ENCODE measurements at regions of chr11 and their contacts with region 1.

Region 1: GRCh38 chr11:62831520-62832335 is at the start of gene STX5:
- DNase-seq: peak; percentile 99
- ATAC-seq: peak; percentile 89
- H3K4me3 ChIP-seq: peak within 1 kb of the TSS; percentile 91
- H3K27ac ChIP-seq: peak within 1 kb of the TSS; percentile 75
- H3K4me1 ChIP-seq: peaks cover 22% of the 10 kb centered on the region
- H3K27me3 ChIP-seq: no peaks in the 10 kb centered on the region
- CTCF ChIP-seq: no peak
- total RNA-seq, gene STX5: 41.4 and 48.2 TPM in 2 replicates

Region 2: GRCh38 chr11:62753736-62754603 is 77.8 kb before region 1 on chr11 and contains the start of gene ZBTB3:
- CTCF ChIA-PET with region 1: no interaction called
- POLR2A ChIA-PET with region 1: interaction called, 11 read pairs
- intact Hi-C with region 1: no loop called
- DNase-seq: peak; percentile 99
- ATAC-seq: peak; percentile 98
- H3K4me3 ChIP-seq: peak within 1 kb of the TSS; percentile 87
- H3K27ac ChIP-seq: peak within 1 kb of the TSS; percentile 73
- H3K4me1 ChIP-seq: peaks cover 16% of the 10 kb centered on the region
- H3K27me3 ChIP-seq: no peaks in the 10 kb centered on the region
- CTCF ChIP-seq: no peak
- total RNA-seq, gene ZBTB3: 2.2 and 3.3 TPM in 2 replicates

Region 3: GRCh38 chr11:62792202-62792575 is 39.5 kb before region 1 on chr11:
- CTCF ChIA-PET with region 1: interaction called, 18 read pairs
- POLR2A ChIA-PET with region 1: interaction called, 3 read pairs
- intact Hi-C with region 1: loop called (anchors 2 kb)
- DNase-seq: no peak
- ATAC-seq: peak; percentile 1; the same call in 1 of the 2 replicates
- H3K4me3 ChIP-seq: peak overlapping the region; percentile 96
- H3K27ac ChIP-seq: 0 out of 2 replicates have a peak overlapping the region, but pooled peaks have one; percentile 4
- H3K4me1 ChIP-seq: peaks cover 27% of the 10 kb centered on the region
- H3K27me3 ChIP-seq: no peaks in the 10 kb centered on the region
- CTCF ChIP-seq: no peak

Region 4: GRCh38 chr11:62847767-62848314 is 16.1 kb after region 1 on chr11:
- CTCF ChIA-PET with region 1: no interaction called
- POLR2A ChIA-PET with region 1: no interaction called
- intact Hi-C with region 1: no loop called
- DNase-seq: no peak
- ATAC-seq: no peak
- H3K4me3 ChIP-seq: no peak overlapping the region
- H3K27ac ChIP-seq: no peak overlapping the region
- H3K4me1 ChIP-seq: peaks cover 4% of the 10 kb centered on the region
- H3K27me3 ChIP-seq: no peaks in the 10 kb centered on the region
- CTCF ChIP-seq: no peak

Region 5: GRCh38 chr11:62880803-62881578 is 49.3 kb after region 1 on chr11 and contains the start of gene SLC3A2:
- CTCF ChIA-PET with region 1: interaction called, 3 read pairs
- POLR2A ChIA-PET with region 1: no interaction called
- intact Hi-C with region 1: loop called (anchors 2 kb)
- DNase-seq: peak; percentile 93
- ATAC-seq: peak; percentile 82
- H3K4me3 ChIP-seq: peak within 1 kb of the TSS; percentile 85
- H3K27ac ChIP-seq: peak within 1 kb of the TSS; percentile 93
- H3K4me1 ChIP-seq: peaks cover 38% of the 10 kb centered on the region
- H3K27me3 ChIP-seq: no peaks in the 10 kb centered on the region
- CTCF ChIP-seq: peak; percentile 81
- total RNA-seq, gene SLC3A2: 243 and 304 TPM in 2 replicates